ENCODE measurements at regions of chr10 and their contacts with region 1.

Region 1: GRCh38 chr10:101031128-101031795 is at the starts of genes PDZD7 and SFXN3:
- DNase-seq: peak; percentile 95
- ATAC-seq: peak; percentile 89
- H3K4me3 ChIP-seq: peak within 1 kb of the TSS; percentile 26 to 96 (median 79)
- H3K4me3 Mint-ChIP-seq: peak within 1 kb of the TSS; percentile 88
- H3K27ac ChIP-seq: peak within 1 kb of the TSS; percentile 63 to 65
- H3K27ac Mint-ChIP-seq: peak within 1 kb of the TSS; percentile 90
- H3K4me1 ChIP-seq: peaks cover 14 to 26% of the 10 kb centered on the region in 2 donors
- H3K4me1 Mint-ChIP-seq: peaks cover 19% of the 10 kb centered on the region
- H3K27me3 ChIP-seq: peaks cover 0 to 29% (median 13%) of the 10 kb centered on the region in 4 experiments
- H3K27me3 Mint-ChIP-seq: peaks cover 15% of the 10 kb centered on the region
- CTCF ChIP-seq: no peak
- total RNA-seq, gene PDZD7: 0.69 and 0.85 TPM in 2 replicates
- total RNA-seq, gene SFXN3: 38.0 and 44.2 TPM in 2 replicates

Region 2: GRCh38 chr10:100988166-100988565 is 43.1 kb before region 1 on chr10:
- CTCF ChIA-PET with region 1: no interaction called
- POLR2A ChIA-PET with region 1: no interaction called
- intact Hi-C with region 1: no loop called
- DNase-seq: no peak
- ATAC-seq: no peak
- H3K4me3 ChIP-seq: peak overlapping the region; percentile 68 to 95 (median 94)
- H3K4me3 Mint-ChIP-seq: peak overlapping the region; percentile 97
- H3K27ac ChIP-seq: no peak overlapping the region
- H3K27ac Mint-ChIP-seq: no peak overlapping the region
- H3K4me1 ChIP-seq: peaks cover 18 to 28% of the 10 kb centered on the region in 2 donors
- H3K4me1 Mint-ChIP-seq: peaks cover 36% of the 10 kb centered on the region
- H3K27me3 ChIP-seq: no peaks in the 10 kb centered on the region
- H3K27me3 Mint-ChIP-seq: no peaks in the 10 kb centered on the region
- CTCF ChIP-seq: no peak

Region 3: DNA sequence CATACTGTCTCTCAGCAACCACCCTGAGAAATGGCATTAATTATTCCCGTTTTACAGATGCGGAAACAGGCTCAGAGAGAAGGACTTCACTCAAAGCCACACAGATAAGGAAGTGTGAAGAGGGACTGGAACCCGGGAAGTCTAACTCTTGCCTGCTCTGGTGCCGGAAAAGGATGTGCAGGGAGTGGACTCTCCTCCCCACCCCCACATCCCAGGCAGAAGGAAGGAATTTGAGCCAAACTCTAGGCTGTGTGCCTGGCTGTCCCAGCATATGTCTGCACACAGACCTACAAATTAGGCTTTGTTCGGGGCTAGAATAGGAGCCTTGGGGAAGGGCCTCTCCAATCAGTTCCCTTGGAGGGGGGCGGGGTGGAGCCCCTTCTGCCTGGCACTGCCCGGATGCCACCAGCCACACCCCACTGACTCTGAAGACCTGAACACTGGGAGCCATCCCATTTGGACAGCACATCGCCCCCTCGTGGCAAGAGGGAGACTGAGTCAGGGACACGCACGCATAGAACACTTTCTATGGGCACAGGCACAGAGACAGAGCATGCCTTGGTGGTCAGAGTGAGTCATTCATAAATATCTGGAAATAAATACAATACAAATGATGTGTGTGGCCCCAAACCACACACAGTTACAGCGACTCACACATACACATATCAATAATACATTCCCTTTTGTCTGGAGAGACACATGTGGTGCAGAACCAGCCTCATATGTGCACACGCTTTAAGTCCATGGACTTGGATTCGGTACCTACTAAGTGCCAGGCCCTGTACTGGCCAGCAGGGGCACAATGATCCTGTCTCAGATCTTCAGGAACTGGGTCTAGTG is 18.5 kb before region 1 on chr10:
- CTCF ChIA-PET with region 1: interaction called, 57 read pairs
- POLR2A ChIA-PET with region 1: no interaction called
- intact Hi-C with region 1: loop called (anchors 2 kb)
- DNase-seq: peak; percentile 77
- ATAC-seq: peak; percentile 86
- H3K4me3 ChIP-seq: no peak overlapping the region
- H3K4me3 Mint-ChIP-seq: no peak overlapping the region
- H3K27ac ChIP-seq: no peak overlapping the region
- H3K27ac Mint-ChIP-seq: no peak overlapping the region
- H3K4me1 ChIP-seq: peaks cover 8 to 14% of the 10 kb centered on the region in 2 donors
- H3K4me1 Mint-ChIP-seq: peaks cover 16% of the 10 kb centered on the region
- H3K27me3 ChIP-seq: peaks cover 0 to 32% (median 18%) of the 10 kb centered on the region in 4 experiments
- H3K27me3 Mint-ChIP-seq: peaks cover 27% of the 10 kb centered on the region
- CTCF ChIP-seq: peak; percentile 83

Region 4: GRCh38 chr10:101018600-101019439 is 12.4 kb before region 1 on chr10:
- CTCF ChIA-PET with region 1: interaction called, 57 read pairs
- POLR2A ChIA-PET with region 1: interaction called, 4 read pairs
- intact Hi-C with region 1: no loop called
- DNase-seq: peak; percentile 67
- ATAC-seq: peak; percentile 46
- H3K4me3 ChIP-seq: peak overlapping the region in 1 of 5 experiments; percentile 23
- H3K4me3 Mint-ChIP-seq: peak overlapping the region; percentile 38
- H3K27ac ChIP-seq: no peak overlapping the region
- H3K27ac Mint-ChIP-seq: no peak overlapping the region
- H3K4me1 ChIP-seq: peaks cover 16 to 22% of the 10 kb centered on the region in 2 donors
- H3K4me1 Mint-ChIP-seq: peaks cover 16% of the 10 kb centered on the region
- H3K27me3 ChIP-seq: peaks cover 0 to 46% (median 24%) of the 10 kb centered on the region in 4 experiments
- H3K27me3 Mint-ChIP-seq: peaks cover 38% of the 10 kb centered on the region
- CTCF ChIP-seq: peak; percentile 69

Region 5: GRCh38 chr10:101042667-101043355 is 11.5 kb after region 1 on chr10:
- CTCF ChIA-PET with region 1: interaction called, 72 read pairs
- POLR2A ChIA-PET with region 1: interaction called, 13 read pairs
- intact Hi-C with region 1: loop called (anchors 1 kb)
- DNase-seq: peak; percentile 88
- ATAC-seq: peak; percentile 90
- H3K4me3 ChIP-seq: peak overlapping the region; percentile 50 to 76 (median 68)
- H3K4me3 Mint-ChIP-seq: peak overlapping the region; percentile 100
- H3K27ac ChIP-seq: peak overlapping the region in 1 of 2 donors; percentile 76
- H3K27ac Mint-ChIP-seq: peak overlapping the region; percentile 90
- H3K4me1 ChIP-seq: peaks cover 6 to 15% of the 10 kb centered on the region in 2 donors
- H3K4me1 Mint-ChIP-seq: peaks cover 17% of the 10 kb centered on the region
- H3K27me3 ChIP-seq: peaks cover 0 to 22% (median 6%) of the 10 kb centered on the region in 4 experiments
- H3K27me3 Mint-ChIP-seq: peaks cover 19% of the 10 kb centered on the region
- CTCF ChIP-seq: no peak

Region 6: GRCh38 chr10:101067356-101068083 is 36.3 kb after region 1 on chr10:
- CTCF ChIA-PET with region 1: interaction called, 10 read pairs
- POLR2A ChIA-PET with region 1: no interaction called
- intact Hi-C with region 1: no loop called
- DNase-seq: peak; percentile 83
- ATAC-seq: peak; percentile 63
- H3K4me3 ChIP-seq: peak overlapping the region; percentile 28 to 80 (median 71)
- H3K4me3 Mint-ChIP-seq: peak overlapping the region; percentile 98
- H3K27ac ChIP-seq: no peak overlapping the region
- H3K27ac Mint-ChIP-seq: peak overlapping the region; percentile 66
- H3K4me1 ChIP-seq: peaks cover 50 to 53% of the 10 kb centered on the region in 2 donors
- H3K4me1 Mint-ChIP-seq: peaks cover 52% of the 10 kb centered on the region
- H3K27me3 ChIP-seq: peaks cover 0 to 49% (median 21%) of the 10 kb centered on the region in 4 experiments
- H3K27me3 Mint-ChIP-seq: peaks cover 25% of the 10 kb centered on the region
- CTCF ChIP-seq: peak; percentile 95